ENCODE measurements at regions of chr6 and their contacts with region 1.

Region 1: GRCh38 chr6:44667668-44668390 is 280.3 kb downstream of the CDC5L start:
- DNase-seq: peak; percentile 41
- H3K4me3 ChIP-seq: no peak overlapping the region
- H3K27ac ChIP-seq: no peak overlapping the region
- H3K4me1 ChIP-seq: no peaks in the 10 kb centered on the region
- H3K27me3 ChIP-seq: no peaks in the 10 kb centered on the region
- CTCF ChIP-seq: peak; percentile 35 to 61 (median 55)
- EP300 ChIP-seq: no peak
- POLR2A ChIP-seq: no peak

Region 2: DNA sequence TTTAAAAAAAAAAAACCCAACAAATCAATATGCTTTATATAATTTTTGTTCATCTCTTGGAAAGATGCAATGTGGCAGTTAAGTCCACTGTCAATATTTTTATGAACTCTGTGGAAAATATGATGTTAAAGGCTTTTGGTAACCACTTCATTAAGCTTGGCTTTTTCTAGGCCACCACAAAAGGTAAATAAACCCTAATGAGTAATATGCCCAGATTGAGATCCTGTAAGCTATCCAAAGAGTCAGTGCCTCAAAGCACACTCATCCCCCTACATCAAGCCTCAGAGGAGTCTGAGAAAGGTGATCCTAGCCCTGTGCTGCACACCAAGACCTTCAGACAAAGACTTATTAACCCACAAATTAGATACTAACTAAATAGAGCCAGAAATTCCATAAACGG is 159.2 kb before region 1 on chr6:
- in situ Hi-C with region 1: no loop called
- intact Hi-C with region 1: no loop called
- DNase-seq: no peak
- H3K4me3 ChIP-seq: no peak overlapping the region
- H3K27ac ChIP-seq: no peak overlapping the region
- H3K4me1 ChIP-seq: no peaks in the 10 kb centered on the region
- H3K27me3 ChIP-seq: no peaks in the 10 kb centered on the region
- CTCF ChIP-seq: no peak
- EP300 ChIP-seq: no peak
- POLR2A ChIP-seq: no peak

Region 3: DNA sequence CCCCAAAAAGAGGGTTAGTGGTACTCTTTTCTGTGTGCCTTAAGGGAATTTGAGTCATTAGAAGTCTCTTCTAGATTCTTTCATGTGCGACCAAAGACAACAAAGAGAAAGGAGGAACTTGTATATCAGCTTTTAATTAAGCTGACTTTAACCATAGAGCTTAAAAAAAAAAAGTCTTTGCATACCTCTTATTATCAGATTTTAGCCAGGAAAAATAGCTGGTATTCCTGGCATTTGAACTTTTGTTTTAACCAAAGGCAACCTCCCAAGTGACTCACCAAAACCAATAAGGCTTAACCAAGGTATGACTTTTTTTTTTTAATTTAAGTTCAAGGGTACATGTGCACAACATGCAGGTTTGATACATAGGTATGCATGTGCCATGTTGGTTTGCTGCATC is 94.7 kb after region 1 on chr6:
- in situ Hi-C with region 1: no loop called
- intact Hi-C with region 1: no loop called
- DNase-seq: no peak
- H3K4me3 ChIP-seq: no peak overlapping the region
- H3K27ac ChIP-seq: no peak overlapping the region
- H3K4me1 ChIP-seq: no peaks in the 10 kb centered on the region
- H3K27me3 ChIP-seq: no peaks in the 10 kb centered on the region
- CTCF ChIP-seq: no peak
- EP300 ChIP-seq: no peak
- POLR2A ChIP-seq: no peak

Region 4: DNA sequence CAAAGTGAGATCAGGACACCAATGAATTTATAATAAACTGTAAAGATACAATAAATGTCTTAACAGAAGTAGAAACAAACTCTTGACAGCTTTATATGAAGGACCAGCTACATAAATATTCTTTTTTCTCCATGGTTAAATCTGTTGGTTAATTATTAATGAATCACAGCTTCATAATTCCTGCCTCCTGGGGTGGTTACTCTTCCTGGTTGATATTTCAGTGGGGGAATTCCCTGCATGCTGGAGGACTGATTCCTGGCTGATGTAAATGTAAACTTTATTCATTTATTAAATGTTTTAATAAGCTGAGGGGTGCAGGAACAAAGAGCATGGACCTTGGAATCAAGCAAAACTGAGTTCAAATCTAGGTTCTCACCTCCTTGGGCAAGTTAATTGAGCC is 1839.6 kb after region 1 on chr6:
- in situ Hi-C with region 1: no loop called
- intact Hi-C with region 1: loop called (anchors 5 kb)
- DNase-seq: no peak
- H3K4me3 ChIP-seq: no peak overlapping the region
- H3K27ac ChIP-seq: no peak overlapping the region
- H3K4me1 ChIP-seq: peaks cover 0 to 26% (median 2%) of the 10 kb centered on the region in 4 donors
- H3K27me3 ChIP-seq: no peaks in the 10 kb centered on the region
- CTCF ChIP-seq: no peak
- EP300 ChIP-seq: no peak
- POLR2A ChIP-seq: no peak

Measured in transverse colon (tissue), 4 donors.